Activated naive CD4-positive, alpha-beta T cell treated with anti-CD3 and anti-CD28 coated beads, Interleukin-2, amount 10 ng/mL, durations not matched to agents 7 days and 5 days (primary cell): ENCODE measurements at regions of chr1 and their contacts with region 1.

Region 1: GRCh38 chr1:206544562-206545257 is 37.4 kb downstream of the RASSF5 start:
- DNase-seq: peak; percentile 87
- H3K4me3 Mint-ChIP-seq: no peak overlapping the region
- H3K27ac Mint-ChIP-seq: no peak overlapping the region
- H3K4me1 Mint-ChIP-seq: peaks cover 21% of the 10 kb centered on the region
- H3K27me3 Mint-ChIP-seq: no peaks in the 10 kb centered on the region

Region 2: DNA sequence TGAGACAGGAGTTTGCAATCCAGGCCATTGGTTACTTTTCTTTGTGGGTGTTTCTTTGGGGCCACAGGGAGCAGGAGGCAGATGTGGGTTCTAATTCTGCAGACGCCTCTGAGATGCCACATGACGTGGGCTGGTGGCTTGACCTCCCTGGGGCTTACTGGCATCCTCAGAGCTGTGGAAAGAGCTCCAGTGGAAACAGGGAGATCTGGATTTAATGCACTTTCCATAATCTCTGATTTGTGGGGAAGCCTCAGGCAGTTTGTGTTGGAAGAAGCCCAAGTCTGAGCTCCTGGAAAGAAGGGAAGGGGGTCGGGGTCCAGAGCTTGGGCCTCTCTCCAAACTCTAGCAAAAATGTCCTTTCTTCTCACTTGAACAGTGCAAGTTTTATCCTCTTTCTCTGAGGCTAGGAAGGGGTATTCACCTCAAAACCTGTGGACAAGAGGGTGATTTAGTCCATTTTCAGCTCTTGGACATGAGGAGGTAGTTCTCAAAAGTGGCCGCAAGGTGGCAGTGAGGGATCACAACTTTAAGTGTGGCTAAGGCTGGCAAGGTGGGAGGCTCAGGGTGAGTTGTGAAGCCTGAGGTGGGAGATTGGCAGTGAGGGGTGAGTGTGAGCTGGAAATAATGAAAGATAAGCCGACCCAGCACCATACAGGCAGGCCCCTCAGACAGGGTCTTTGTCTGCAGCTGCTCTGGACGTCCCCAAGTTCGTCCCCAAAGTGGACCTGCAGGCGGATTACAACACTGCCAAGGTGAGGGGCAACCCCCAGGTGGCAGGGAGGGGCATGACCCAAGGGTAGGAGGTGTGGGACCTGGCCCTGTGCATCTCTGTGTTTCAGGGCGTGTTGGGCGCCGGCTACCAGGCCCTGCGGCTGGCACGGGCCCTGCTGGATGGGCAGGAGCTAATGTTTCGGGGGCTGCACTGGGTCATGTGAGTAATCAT is 65.3 kb before region 1 on chr1:
- CTCF ChIA-PET with region 1: interaction called, 10 read pairs
- DNase-seq: peak; percentile 79
- H3K4me3 Mint-ChIP-seq: no peak overlapping the region
- H3K27ac Mint-ChIP-seq: peak overlapping the region; percentile 58
- H3K4me1 Mint-ChIP-seq: peaks cover 16% of the 10 kb centered on the region
- H3K27me3 Mint-ChIP-seq: no peaks in the 10 kb centered on the region

Region 3: GRCh38 chr1:206496131-206496793 is 48.4 kb before region 1 on chr1:
- CTCF ChIA-PET with region 1: no interaction called
- DNase-seq: no peak
- H3K4me3 Mint-ChIP-seq: no peak overlapping the region
- H3K27ac Mint-ChIP-seq: no peak overlapping the region
- H3K4me1 Mint-ChIP-seq: no peaks in the 10 kb centered on the region
- H3K27me3 Mint-ChIP-seq: no peaks in the 10 kb centered on the region

Region 4: GRCh38 chr1:206556750-206557635 is 12.3 kb after region 1 on chr1:
- CTCF ChIA-PET with region 1: interaction called, 79 read pairs
- DNase-seq: peak; percentile 95
- H3K4me3 Mint-ChIP-seq: peak overlapping the region; percentile 86
- H3K27ac Mint-ChIP-seq: peak overlapping the region; percentile 93
- H3K4me1 Mint-ChIP-seq: peaks cover 72% of the 10 kb centered on the region
- H3K27me3 Mint-ChIP-seq: no peaks in the 10 kb centered on the region

Region 5: DNA sequence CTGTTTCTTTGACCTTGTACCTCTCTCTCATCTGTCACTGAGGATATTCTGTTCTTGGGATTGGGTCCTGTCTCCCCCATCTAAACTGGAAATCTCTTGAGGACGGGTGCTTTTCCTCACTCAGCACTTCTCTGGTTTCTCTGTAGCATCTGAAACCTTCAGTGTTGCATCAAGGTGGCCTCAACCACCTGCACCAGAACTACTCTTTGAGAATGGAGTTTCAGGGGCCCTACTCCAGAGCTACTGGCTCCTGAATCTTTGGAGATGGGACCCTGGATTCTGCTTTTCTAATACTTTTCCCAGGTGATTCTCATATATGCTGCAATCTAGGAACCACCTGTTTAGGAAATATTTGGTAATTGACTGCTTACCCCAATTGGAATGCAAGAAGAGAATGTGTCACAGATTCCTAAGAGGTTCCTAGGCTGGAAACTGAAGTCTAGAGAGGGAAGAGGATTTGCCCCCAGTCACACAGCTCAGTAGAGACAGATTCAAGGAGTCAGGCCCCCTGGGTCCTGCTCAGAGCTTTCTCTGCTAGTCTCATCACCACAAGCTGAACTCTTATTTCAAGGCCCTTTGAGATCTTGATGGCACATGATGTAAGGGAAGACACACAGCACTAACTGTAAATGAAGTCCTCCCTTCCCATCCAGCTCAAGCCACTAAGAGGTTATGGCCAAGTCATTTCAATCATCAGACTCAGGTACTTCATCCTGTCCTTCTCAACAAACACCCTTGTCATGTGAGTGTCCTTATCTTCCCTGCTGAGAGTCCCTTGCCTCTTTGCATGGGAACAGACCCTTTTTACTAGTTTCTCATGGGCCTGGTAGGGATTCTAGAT is 18.9 kb after region 1 on chr1:
- CTCF ChIA-PET with region 1: interaction called, 28 read pairs
- DNase-seq: no peak
- H3K4me3 Mint-ChIP-seq: peak overlapping the region; percentile 56
- H3K27ac Mint-ChIP-seq: peak overlapping the region; percentile 93
- H3K4me1 Mint-ChIP-seq: peaks cover 93% of the 10 kb centered on the region
- H3K27me3 Mint-ChIP-seq: no peaks in the 10 kb centered on the region

Region 6: DNA sequence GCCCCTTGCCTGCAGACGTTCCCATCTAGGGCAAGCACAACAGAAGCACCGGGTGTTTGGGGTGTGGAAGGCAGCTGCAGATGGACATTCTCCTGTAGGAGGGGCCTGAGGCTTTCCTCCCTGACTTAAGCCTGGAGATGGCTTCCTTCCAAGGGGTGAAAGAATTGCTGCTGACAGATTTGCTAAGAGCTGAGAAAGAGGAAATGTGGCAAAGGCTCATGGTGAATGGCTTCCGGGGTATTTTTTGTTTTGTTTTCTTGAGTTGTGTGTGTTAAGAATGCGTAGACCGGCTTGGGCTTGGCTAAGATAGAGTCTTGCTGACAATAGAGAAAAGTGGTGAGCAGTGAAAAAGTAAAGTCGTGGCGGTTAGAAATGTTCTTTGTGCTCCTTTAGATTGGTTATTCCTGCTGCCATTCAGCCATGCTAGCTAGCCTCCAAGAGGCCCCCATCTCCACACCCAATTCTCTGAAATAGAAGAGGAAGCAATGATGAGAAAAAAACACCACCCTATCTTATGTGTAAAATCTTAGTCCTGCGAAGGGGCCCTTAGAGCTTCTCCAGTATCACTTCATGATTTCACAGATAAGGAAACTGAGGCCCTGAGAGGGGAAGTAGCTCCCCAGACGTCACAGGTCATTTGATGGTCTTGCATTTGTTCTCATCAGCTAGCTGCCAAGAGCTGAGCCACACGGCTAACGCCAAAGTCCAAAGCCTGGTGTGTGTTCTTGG is 30.6 kb after region 1 on chr1:
- CTCF ChIA-PET with region 1: interaction called, 255 read pairs
- DNase-seq: peak; percentile 67
- H3K4me3 Mint-ChIP-seq: peak overlapping the region; percentile 60
- H3K27ac Mint-ChIP-seq: peak overlapping the region; percentile 95
- H3K4me1 Mint-ChIP-seq: peaks cover 100% of the 10 kb centered on the region
- H3K27me3 Mint-ChIP-seq: no peaks in the 10 kb centered on the region

Region 7: DNA sequence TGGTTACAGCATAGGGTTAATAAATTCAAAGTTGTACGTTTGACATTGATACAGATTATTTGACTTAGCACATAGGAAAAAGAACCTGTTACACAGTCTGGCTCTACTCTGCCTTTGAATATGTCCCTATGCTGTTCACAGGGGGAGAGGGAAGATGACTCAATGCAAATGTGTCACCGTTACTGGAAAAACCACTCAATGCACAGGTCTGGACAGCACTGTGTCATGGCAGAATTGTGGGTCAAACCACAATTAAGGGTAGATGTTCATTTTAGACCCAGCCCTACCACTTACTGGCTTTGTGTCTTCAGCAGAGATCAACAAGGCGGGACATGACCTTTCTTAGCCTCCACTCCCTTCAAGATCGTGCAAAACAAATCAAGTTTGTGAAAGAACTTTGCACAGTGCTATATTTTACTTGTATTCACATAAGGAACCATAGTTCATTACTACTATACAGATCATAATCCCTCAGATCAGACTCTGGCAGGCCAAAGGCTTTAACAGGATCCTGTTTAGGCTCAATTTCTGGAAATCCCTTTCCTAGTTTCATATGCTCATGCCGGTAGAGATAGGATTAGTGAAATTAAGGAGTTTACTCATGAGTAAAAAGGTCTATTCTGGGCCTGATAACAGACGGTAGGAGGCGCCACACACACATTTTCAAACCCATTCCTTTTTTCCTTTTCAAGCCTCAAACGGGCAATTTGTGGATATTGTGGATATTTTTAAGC is 45.5 kb after region 1 on chr1:
- CTCF ChIA-PET with region 1: interaction called, 255 read pairs
- DNase-seq: peak; percentile 65
- H3K4me3 Mint-ChIP-seq: peak overlapping the region; percentile 5
- H3K27ac Mint-ChIP-seq: peak overlapping the region; percentile 91
- H3K4me1 Mint-ChIP-seq: peaks cover 64% of the 10 kb centered on the region
- H3K27me3 Mint-ChIP-seq: no peaks in the 10 kb centered on the region

Region 8: DNA sequence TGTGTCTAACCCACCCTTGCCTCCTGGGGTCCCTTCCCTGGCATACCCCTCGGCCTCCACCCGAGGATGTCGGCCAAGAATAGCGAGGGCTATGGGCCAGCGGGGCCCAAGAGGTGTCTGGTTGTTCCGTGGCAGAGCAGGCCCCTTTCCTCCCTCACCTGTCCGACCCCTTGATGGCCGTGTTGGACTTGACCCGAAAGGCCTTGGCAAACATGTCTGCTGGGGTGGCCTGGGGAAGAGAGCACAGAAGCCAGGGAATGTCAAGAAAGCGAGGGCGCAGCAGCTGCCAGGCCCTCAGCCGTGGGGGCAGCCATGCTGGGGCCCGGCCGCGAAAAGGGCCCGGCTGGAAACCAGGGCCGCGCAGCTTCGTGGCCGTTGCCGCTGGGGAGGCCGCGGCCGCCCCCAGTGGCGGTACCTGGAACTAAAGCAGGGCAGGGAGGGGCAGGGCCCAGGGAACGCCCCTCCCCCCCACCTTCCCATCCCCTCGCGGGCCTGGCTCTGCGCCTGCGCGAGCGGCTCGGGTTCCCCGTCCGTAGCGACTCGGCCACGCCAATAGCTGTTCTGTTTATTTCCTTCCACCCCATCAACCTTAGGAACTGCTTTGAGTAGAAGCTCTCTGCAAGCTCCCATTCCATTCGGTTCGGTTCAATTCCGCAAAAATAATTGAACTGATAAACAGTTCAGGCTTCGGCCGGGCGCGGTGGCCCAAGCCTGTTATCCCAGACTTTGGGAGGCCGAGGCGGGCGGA is 67.6 kb after region 1 on chr1 and contains the start of gene EIF2D:
- CTCF ChIA-PET with region 1: interaction called, 24 read pairs
- DNase-seq: peak; percentile 94
- H3K4me3 Mint-ChIP-seq: peak within 1 kb of the TSS; percentile 81
- H3K27ac Mint-ChIP-seq: peak within 1 kb of the TSS; percentile 86
- H3K4me1 Mint-ChIP-seq: peaks cover 30% of the 10 kb centered on the region
- H3K27me3 Mint-ChIP-seq: peaks cover 18% of the 10 kb centered on the region